ENCODE measurements at regions of chr3 and their contacts with region 1.

Region 1: GRCh38 chr3:101791778-101792177 is 12.8 kb downstream of the NXPE3 start:
- DNase-seq: no peak
- ATAC-seq: no peak

Region 2: GRCh38 chr3:102536456-102536855 is 744.7 kb after region 1 on chr3:
- intact Hi-C with region 1: loop called (anchors 10 kb)
- DNase-seq: no peak
- ATAC-seq: peak; percentile 67

Measured in Right ventricle myocardium superior (tissue), 1 donor.